ENCODE measurements at regions of chr12 and their contacts with region 1.

Region 1: GRCh38 chr12:42129595-42130204 is 15.0 kb downstream of the GXYLT1 start:
- DNase-seq: peak in 2 of 9 experiments; percentile 43 to 57
- ATAC-seq: peak; percentile 55
- H3K4me3 ChIP-seq: no peak overlapping the region
- H3K4me3 Mint-ChIP-seq: no peak overlapping the region
- H3K27ac ChIP-seq: no peak overlapping the region
- H3K27ac Mint-ChIP-seq: no peak overlapping the region
- H3K4me1 ChIP-seq: peaks cover 4% of the 10 kb centered on the region
- H3K4me1 Mint-ChIP-seq: peaks cover 49% of the 10 kb centered on the region
- H3K27me3 ChIP-seq: no peaks in the 10 kb centered on the region
- H3K27me3 Mint-ChIP-seq: no peaks in the 10 kb centered on the region
- CTCF ChIP-seq: peak; percentile 42

Region 2: GRCh38 chr12:40802656-40803055 is 1327.0 kb before region 1 on chr12:
- CTCF ChIA-PET with region 1: no interaction called
- POLR2A ChIA-PET with region 1: no interaction called
- intact Hi-C with region 1: no loop called
- DNase-seq: no peak
- ATAC-seq: no peak
- H3K4me3 ChIP-seq: no peak overlapping the region
- H3K4me3 Mint-ChIP-seq: no peak overlapping the region
- H3K27ac ChIP-seq: no peak overlapping the region
- H3K27ac Mint-ChIP-seq: no peak overlapping the region
- H3K4me1 ChIP-seq: no peaks in the 10 kb centered on the region
- H3K4me1 Mint-ChIP-seq: no peaks in the 10 kb centered on the region
- H3K27me3 ChIP-seq: no peaks in the 10 kb centered on the region
- H3K27me3 Mint-ChIP-seq: no peaks in the 10 kb centered on the region
- CTCF ChIP-seq: no peak

Region 3: DNA sequence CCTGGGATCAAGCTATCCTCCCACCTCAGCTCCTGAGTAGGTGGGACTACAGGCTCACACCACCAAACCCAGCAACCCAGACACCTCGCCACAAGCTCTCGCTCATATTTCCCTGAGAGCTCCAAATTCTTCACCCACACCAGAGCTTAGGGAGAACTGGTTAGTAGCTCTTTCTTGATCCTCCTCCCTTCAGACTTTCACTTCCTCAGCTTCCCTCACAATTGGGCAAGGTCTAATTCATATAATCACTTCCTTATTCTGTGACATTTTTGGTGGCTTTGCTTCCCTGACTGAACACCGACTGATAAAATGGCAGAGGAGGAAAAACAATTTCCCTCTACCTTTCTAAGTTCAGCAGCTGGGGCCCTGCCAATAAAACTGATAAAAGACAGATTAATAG is 73.6 kb before region 1 on chr12:
- CTCF ChIA-PET with region 1: no interaction called
- POLR2A ChIA-PET with region 1: no interaction called
- intact Hi-C with region 1: no loop called
- DNase-seq: peak in 1 of 9 experiments; percentile 14
- ATAC-seq: no peak
- H3K4me3 ChIP-seq: no peak overlapping the region
- H3K4me3 Mint-ChIP-seq: no peak overlapping the region
- H3K27ac ChIP-seq: no peak overlapping the region
- H3K27ac Mint-ChIP-seq: no peak overlapping the region
- H3K4me1 ChIP-seq: no peaks in the 10 kb centered on the region
- H3K4me1 Mint-ChIP-seq: no peaks in the 10 kb centered on the region
- H3K27me3 ChIP-seq: peaks cover 2 to 4% of the 10 kb centered on the region in 2 experiments
- H3K27me3 Mint-ChIP-seq: peaks cover 15% of the 10 kb centered on the region
- CTCF ChIP-seq: no peak

Region 4: DNA sequence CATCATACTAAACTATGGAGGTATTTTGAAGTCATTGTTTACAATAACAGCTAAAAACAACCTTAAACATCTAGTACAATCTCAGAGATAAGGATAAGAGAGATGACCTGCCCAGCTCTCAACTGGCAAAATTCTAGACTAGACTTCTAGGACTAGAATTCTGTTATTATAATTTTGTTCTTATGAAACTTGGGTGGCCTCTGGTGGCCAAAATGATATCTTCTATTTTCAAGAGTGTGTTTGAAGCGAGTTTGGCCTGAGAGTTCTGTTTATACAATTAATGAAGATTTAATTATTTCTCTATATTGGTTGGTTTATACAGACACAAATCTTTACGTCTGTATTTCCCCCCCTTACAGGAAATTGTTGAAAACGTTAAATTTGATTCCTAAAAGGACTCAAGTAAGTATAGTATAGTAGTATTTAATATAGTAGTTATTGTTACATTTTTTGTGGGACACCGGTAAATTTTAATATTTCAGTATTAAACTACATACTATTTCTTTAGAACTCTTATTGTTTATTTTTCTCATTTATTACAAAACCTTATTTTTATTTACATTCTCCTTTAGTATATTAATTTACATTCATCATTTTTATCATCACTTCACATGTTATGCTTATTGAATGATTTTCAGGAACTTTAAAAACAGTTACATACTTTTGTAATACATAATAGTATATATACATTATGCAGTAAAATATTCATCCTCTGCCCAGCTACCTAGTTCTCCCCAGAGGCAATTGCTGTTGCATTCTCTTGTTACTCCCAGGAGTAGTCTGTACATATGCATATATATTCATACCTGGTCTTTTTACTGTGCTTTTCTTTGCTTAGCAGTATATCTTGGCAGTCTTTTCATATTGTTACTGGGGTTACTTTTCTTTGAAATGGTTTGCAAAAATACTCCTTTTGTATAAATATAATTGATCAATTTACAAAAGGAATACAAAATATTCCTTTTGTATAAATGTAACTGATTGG is 202.9 kb after region 1 on chr12:
- CTCF ChIA-PET with region 1: interaction called, 8 read pairs
- POLR2A ChIA-PET with region 1: no interaction called
- intact Hi-C with region 1: loop called (anchors 1 to 2 kb)
- DNase-seq: peak in 4 of 9 experiments; percentile 26 to 65 (median 46)
- ATAC-seq: peak; percentile 64
- H3K4me3 ChIP-seq: no peak overlapping the region
- H3K4me3 Mint-ChIP-seq: no peak overlapping the region
- H3K27ac ChIP-seq: no peak overlapping the region
- H3K27ac Mint-ChIP-seq: peak overlapping the region; percentile 43
- H3K4me1 ChIP-seq: peaks cover 26% of the 10 kb centered on the region
- H3K4me1 Mint-ChIP-seq: peaks cover 69% of the 10 kb centered on the region
- H3K27me3 ChIP-seq: no peaks in the 10 kb centered on the region
- H3K27me3 Mint-ChIP-seq: no peaks in the 10 kb centered on the region
- CTCF ChIP-seq: peak; percentile 78

Region 5: DNA sequence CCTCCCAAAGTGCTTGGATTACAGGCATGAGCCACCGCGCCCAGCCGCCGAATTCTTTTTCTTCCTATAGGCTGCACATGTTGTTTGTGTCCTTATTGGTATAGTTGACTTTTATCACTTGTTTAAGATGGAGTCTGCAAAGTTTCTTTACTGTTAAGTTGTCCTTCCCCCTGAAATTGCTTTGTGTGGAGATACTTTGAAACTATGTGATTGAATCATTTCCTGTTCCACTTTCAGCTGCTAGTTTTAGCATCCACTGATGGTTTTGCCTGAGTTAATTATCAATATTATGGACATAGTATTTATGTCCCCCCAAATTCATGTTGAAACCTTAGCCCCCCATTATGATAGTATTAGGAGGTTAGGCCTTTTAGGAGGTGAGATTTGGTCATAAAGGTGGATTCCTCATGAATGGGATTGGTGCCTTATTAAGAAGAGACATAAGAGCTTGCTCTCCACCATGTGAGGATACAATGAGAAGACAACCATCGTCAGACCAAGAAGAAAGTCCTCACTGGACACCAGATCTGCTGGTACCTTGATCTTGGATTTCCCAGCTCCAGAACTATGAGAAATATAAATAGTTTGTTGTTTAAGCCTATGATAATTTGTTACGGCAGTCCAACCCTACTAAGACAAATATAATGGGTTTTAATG is 231.2 kb after region 1 on chr12:
- CTCF ChIA-PET with region 1: no interaction called
- POLR2A ChIA-PET with region 1: no interaction called
- intact Hi-C with region 1: loop called in 1 of 2 experiments (anchors 2 kb)
- DNase-seq: no peak
- ATAC-seq: no peak
- H3K4me3 ChIP-seq: no peak overlapping the region
- H3K4me3 Mint-ChIP-seq: no peak overlapping the region
- H3K27ac ChIP-seq: no peak overlapping the region
- H3K27ac Mint-ChIP-seq: no peak overlapping the region
- H3K4me1 ChIP-seq: no peaks in the 10 kb centered on the region
- H3K4me1 Mint-ChIP-seq: peaks cover 47% of the 10 kb centered on the region
- H3K27me3 ChIP-seq: no peaks in the 10 kb centered on the region
- H3K27me3 Mint-ChIP-seq: no peaks in the 10 kb centered on the region
- CTCF ChIP-seq: no peak